CD4-positive, alpha-beta memory T cell (primary cell): ENCODE measurements at regions of chr1 and their contacts with region 1.

Region 1: GRCh38 chr1:234610348-234611152 is 572 bp upstream of the IRF2BP2 start:
- DNase-seq: peak; percentile 90 to 93 (median 91)
- H3K4me3 ChIP-seq: peak overlapping the region; percentile 67 to 72
- H3K4me3 Mint-ChIP-seq: peak overlapping the region; percentile 88 to 95 (median 94)
- H3K27ac ChIP-seq: peak overlapping the region; percentile 92
- H3K27ac Mint-ChIP-seq: peak overlapping the region; percentile 98 to 100 (median 99)
- H3K4me1 ChIP-seq: peaks cover 47% of the 10 kb centered on the region
- H3K4me1 Mint-ChIP-seq: peaks cover 34 to 65% (median 47%) of the 10 kb centered on the region in 4 donors
- H3K27me3 ChIP-seq: no peaks in the 10 kb centered on the region
- H3K27me3 Mint-ChIP-seq: peaks cover 0 to 6% of the 10 kb centered on the region in 2 donors

Region 2: DNA sequence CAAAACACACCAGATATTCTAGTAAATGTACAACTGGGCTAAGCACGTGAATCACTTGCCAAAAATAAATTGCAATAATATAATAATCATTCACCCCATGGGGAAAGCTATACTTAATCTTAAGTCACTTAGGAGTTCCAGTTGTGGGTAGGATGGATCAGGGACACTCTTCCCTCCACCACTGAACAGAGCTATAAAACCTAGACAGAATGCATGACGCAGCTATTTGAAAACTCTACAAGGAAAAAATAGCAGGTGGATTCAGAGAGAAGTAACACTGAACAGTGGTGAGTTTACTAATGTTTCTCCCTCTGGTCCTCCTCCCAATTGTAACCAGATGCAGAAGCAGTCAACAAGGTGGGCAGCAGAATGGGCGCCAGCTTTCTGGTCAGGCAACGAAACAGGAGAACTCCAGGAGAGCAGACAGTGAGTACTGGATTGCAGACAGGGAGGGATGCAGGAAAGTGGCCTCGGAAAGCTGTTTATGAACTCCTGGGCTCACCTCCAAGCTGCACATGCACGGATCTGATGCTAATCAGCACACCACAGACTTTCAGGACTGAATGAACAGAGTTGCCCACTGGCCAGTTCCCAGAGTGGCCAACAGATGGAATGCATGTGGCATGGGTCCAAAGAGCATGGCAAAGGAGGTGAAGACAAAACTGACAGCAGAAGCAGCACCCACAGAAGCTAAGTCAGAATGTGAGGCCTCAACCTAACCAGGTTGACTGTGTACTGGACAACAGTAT is 173.0 kb before region 1 on chr1:
- CTCF ChIA-PET with region 1: no interaction called
- POLR2A ChIA-PET with region 1: no interaction called
- intact Hi-C with region 1: no loop called
- DNase-seq: no peak
- H3K4me3 ChIP-seq: no peak overlapping the region
- H3K4me3 Mint-ChIP-seq: no peak overlapping the region
- H3K27ac ChIP-seq: no peak overlapping the region
- H3K27ac Mint-ChIP-seq: no peak overlapping the region
- H3K4me1 ChIP-seq: no peaks in the 10 kb centered on the region
- H3K4me1 Mint-ChIP-seq: peaks cover 0 to 2% (median under 1%) of the 10 kb centered on the region in 4 donors
- H3K27me3 ChIP-seq: no peaks in the 10 kb centered on the region
- H3K27me3 Mint-ChIP-seq: no peaks in the 10 kb centered on the region

Region 3: GRCh38 chr1:234599617-234600417 is 10.7 kb before region 1 on chr1:
- CTCF ChIA-PET with region 1: interaction called, 78 read pairs
- POLR2A ChIA-PET with region 1: interaction called, 312 read pairs
- intact Hi-C with region 1: loop called (anchors 1 kb)
- DNase-seq: peak; percentile 81 to 95 (median 84)
- H3K4me3 ChIP-seq: peak overlapping the region; percentile 17 to 46
- H3K4me3 Mint-ChIP-seq: peak overlapping the region; percentile 84 to 95 (median 88)
- H3K27ac ChIP-seq: peak overlapping the region; percentile 96
- H3K27ac Mint-ChIP-seq: peak overlapping the region; percentile 92 to 99 (median 97)
- H3K4me1 ChIP-seq: peaks cover 56% of the 10 kb centered on the region
- H3K4me1 Mint-ChIP-seq: peaks cover 37 to 64% (median 48%) of the 10 kb centered on the region in 4 donors
- H3K27me3 ChIP-seq: no peaks in the 10 kb centered on the region
- H3K27me3 Mint-ChIP-seq: no peaks in the 10 kb centered on the region

Region 4: DNA sequence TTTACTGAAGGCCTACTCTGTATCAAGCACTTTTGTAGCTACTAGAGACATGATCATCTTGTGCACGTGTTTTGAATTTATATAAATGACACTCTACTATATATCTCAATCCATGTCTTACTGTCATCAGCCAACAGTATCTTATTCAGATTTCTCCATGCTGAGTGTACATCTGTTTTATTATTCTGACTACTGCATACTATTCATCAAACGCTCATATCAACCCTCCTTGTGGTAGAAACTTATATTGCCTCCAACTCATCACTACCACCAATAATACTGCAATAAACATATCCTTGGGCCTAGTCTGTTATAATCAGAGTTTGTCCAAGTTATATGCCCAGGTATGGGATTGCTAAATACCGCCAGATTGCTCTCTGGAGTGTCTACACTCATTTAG is 81.0 kb after region 1 on chr1:
- CTCF ChIA-PET with region 1: no interaction called
- POLR2A ChIA-PET with region 1: interaction called, 4 read pairs
- intact Hi-C with region 1: loop called (anchors 1 kb)
- DNase-seq: peak in 4 of 5 donors; percentile 11 to 25 (median 14)
- H3K4me3 ChIP-seq: no peak overlapping the region
- H3K4me3 Mint-ChIP-seq: no peak overlapping the region
- H3K27ac ChIP-seq: no peak overlapping the region
- H3K27ac Mint-ChIP-seq: peak overlapping the region in 1 of 7 donors; percentile 68
- H3K4me1 ChIP-seq: no peaks in the 10 kb centered on the region
- H3K4me1 Mint-ChIP-seq: no peaks in the 10 kb centered on the region
- H3K27me3 ChIP-seq: no peaks in the 10 kb centered on the region
- H3K27me3 Mint-ChIP-seq: no peaks in the 10 kb centered on the region

Region 5: DNA sequence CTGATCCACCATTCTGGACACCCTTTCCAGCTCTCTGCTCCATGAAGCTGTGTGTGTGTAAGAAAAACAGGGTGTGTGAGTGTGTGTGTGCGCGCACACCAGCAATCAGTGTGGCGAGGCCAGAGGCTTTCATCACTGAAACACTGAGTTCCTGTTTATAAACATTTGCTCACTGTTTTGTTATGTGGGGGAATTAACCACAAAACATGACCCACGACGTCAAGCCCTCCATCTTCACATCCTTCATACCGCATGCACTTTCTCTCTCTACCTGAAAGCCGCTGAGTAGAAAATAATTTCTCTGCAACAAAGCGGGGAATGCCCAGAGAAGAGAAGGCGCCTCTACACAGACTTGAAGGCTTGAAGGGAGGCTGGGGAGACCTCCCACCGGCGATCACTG is 148.3 kb after region 1 on chr1:
- CTCF ChIA-PET with region 1: interaction called, 5 read pairs
- POLR2A ChIA-PET with region 1: interaction called, 4 read pairs
- intact Hi-C with region 1: loop called (anchors 1 kb)
- DNase-seq: peak; percentile 78 to 89 (median 83)
- H3K4me3 ChIP-seq: no peak overlapping the region
- H3K4me3 Mint-ChIP-seq: peak overlapping the region; percentile 27 to 85 (median 70)
- H3K27ac ChIP-seq: peak overlapping the region; percentile 36
- H3K27ac Mint-ChIP-seq: peak overlapping the region; percentile 88 to 99 (median 97)
- H3K4me1 ChIP-seq: peaks cover 39% of the 10 kb centered on the region
- H3K4me1 Mint-ChIP-seq: peaks cover 22 to 49% (median 33%) of the 10 kb centered on the region in 4 donors
- H3K27me3 ChIP-seq: no peaks in the 10 kb centered on the region
- H3K27me3 Mint-ChIP-seq: no peaks in the 10 kb centered on the region

Region 6: GRCh38 chr1:234912548-234913277 is 302.2 kb after region 1 on chr1:
- CTCF ChIA-PET with region 1: no interaction called
- POLR2A ChIA-PET with region 1: interaction called, 17 read pairs
- intact Hi-C with region 1: no loop called
- DNase-seq: peak in 2 of 5 donors; percentile 11 to 16
- H3K4me3 ChIP-seq: no peak overlapping the region
- H3K4me3 Mint-ChIP-seq: peak overlapping the region in 4 of 8 donors; percentile 17 to 73 (median 52)
- H3K27ac ChIP-seq: no peak overlapping the region
- H3K27ac Mint-ChIP-seq: peak overlapping the region; percentile 68 to 95 (median 93)
- H3K4me1 ChIP-seq: peaks cover 29% of the 10 kb centered on the region
- H3K4me1 Mint-ChIP-seq: peaks cover 24 to 48% (median 33%) of the 10 kb centered on the region in 4 donors
- H3K27me3 ChIP-seq: no peaks in the 10 kb centered on the region
- H3K27me3 Mint-ChIP-seq: no peaks in the 10 kb centered on the region

Region 7: DNA sequence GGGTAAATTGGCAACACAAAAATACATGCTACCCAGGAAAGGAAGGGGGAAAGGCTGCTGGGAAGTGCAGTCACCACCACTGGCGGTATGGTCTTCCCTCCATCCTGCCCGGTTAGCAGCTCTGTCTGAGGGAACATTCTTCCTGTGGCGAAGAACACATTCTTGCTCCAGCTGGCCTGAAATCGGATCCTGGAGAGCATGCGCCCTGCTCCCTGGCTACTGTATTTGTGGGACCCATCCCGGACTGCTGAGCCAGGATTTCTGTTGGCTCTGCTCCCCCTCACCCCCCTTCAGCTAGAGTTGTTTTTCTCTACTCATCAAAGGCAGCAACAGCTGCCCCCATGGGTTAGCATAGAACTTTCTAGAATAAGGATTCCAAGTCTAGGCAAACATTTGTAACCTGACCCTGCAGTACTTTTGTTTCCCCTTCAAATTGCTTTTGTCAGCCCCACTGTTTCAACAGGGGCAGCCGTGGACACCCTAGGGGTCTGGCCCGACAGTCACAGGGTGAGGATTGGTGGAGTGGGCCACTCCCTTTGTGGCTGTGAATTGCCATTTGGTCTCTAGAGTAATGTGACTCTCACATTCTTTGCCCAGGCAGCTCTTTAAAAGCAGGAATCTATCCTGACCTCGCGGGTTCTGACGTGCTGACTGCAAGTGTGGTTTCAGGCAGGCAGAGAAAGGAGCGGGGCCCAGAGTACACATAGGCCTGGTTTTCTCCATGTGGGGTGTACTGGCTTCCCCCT is 360.4 kb after region 1 on chr1:
- CTCF ChIA-PET with region 1: interaction called, 33 read pairs
- POLR2A ChIA-PET with region 1: interaction called, 104 read pairs
- intact Hi-C with region 1: no loop called
- DNase-seq: peak in 1 of 5 donors; percentile 6
- H3K4me3 ChIP-seq: peak overlapping the region in 1 of 2 donors; percentile 6
- H3K4me3 Mint-ChIP-seq: peak overlapping the region in 7 of 8 donors; percentile 11 to 73 (median 58)
- H3K27ac ChIP-seq: peak overlapping the region; percentile 27
- H3K27ac Mint-ChIP-seq: peak overlapping the region; percentile 14 to 91 (median 87)
- H3K4me1 ChIP-seq: peaks cover 54% of the 10 kb centered on the region
- H3K4me1 Mint-ChIP-seq: peaks cover 27 to 69% (median 41%) of the 10 kb centered on the region in 4 donors
- H3K27me3 ChIP-seq: no peaks in the 10 kb centered on the region
- H3K27me3 Mint-ChIP-seq: no peaks in the 10 kb centered on the region

Region 8: DNA sequence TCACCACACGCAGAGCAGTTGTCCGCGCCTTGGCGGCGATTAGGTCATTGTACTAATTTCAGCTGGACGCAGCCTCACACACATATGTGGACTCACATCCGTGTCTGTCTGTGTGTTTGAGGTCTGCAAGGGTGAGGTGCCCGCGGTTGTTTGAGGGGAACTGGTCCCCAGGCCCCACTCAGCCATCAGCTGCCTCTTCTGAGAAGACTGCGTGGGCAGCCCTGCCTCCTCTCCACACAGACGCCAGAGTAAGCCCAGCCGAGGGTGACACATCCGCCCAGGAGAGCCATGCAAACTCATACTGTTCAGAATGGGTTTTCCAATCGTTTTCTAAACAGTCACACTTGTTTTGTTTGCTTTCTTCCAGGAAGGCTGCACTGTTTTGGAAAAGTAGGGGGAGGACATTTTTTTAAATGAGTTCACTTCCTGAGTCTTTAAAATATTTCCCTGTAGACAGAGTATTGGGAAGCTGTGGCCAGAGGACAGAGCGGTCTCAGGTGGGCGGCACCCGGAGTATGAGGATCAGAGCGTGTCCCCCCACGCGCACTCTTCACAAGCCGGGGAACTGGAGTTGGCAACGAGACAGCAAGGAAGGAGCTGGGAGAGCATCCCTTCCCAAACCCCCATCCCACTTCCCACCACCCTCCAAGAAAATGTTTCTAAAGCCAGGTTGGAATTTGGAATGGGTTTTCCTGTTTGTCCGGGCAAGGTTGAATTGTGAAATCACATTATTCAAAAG is 464.8 kb after region 1 on chr1:
- CTCF ChIA-PET with region 1: interaction called, 4 read pairs
- POLR2A ChIA-PET with region 1: interaction called, 10 read pairs
- intact Hi-C with region 1: no loop called
- DNase-seq: peak; percentile 22 to 66 (median 32)
- H3K4me3 ChIP-seq: peak overlapping the region in 1 of 2 donors; percentile 16
- H3K4me3 Mint-ChIP-seq: peak overlapping the region; percentile 75 to 93 (median 82)
- H3K27ac ChIP-seq: peak overlapping the region; percentile 1
- H3K27ac Mint-ChIP-seq: peak overlapping the region; percentile 22 to 93 (median 88)
- H3K4me1 ChIP-seq: peaks cover 25% of the 10 kb centered on the region
- H3K4me1 Mint-ChIP-seq: peaks cover 23 to 32% (median 27%) of the 10 kb centered on the region in 4 donors
- H3K27me3 ChIP-seq: no peaks in the 10 kb centered on the region
- H3K27me3 Mint-ChIP-seq: no peaks in the 10 kb centered on the region